Thyroid gland (tissue), 4 donors: ENCODE measurements at regions of chr11 and their contacts with region 1.

Region 1: DNA sequence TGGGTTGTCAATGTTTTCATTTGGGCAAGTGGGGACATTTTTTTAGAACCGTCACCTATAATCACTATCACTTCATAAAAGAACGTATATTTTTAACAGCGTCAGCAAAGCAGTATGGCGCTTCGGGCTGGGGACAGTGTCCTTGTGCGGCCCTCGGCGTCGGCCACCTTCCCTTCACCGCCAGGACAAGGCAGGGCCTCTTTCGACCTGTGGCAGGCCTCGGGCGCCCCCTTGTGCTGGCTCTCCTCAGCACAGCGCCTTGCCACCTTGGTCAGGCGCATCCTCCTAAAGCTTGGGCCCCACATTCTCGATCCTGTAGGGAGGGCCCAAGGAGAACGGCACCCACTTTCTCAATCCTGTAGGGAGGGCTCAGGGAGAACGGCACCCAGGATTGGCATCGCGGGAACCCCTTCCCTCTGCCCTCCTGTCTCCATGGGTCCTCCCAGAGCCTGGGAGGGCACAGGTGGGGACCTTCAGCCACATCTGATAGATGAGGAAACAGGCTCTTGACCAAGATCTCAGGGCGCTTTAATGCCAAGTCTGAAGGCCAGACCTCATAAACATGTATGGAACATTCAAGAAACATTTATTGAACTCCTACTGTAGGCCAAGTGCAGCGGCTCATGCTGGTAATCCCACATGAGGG is 11.5 kb upstream of the FADD start:
- DNase-seq: peak; percentile 80 to 82
- H3K4me3 ChIP-seq: no peak overlapping the region
- H3K27ac ChIP-seq: no peak overlapping the region
- H3K4me1 ChIP-seq: no peaks in the 10 kb centered on the region
- H3K27me3 ChIP-seq: no peaks in the 10 kb centered on the region
- CTCF ChIP-seq: peak; percentile 84 to 97 (median 90)
- POLR2A ChIP-seq: no peak

Region 2: DNA sequence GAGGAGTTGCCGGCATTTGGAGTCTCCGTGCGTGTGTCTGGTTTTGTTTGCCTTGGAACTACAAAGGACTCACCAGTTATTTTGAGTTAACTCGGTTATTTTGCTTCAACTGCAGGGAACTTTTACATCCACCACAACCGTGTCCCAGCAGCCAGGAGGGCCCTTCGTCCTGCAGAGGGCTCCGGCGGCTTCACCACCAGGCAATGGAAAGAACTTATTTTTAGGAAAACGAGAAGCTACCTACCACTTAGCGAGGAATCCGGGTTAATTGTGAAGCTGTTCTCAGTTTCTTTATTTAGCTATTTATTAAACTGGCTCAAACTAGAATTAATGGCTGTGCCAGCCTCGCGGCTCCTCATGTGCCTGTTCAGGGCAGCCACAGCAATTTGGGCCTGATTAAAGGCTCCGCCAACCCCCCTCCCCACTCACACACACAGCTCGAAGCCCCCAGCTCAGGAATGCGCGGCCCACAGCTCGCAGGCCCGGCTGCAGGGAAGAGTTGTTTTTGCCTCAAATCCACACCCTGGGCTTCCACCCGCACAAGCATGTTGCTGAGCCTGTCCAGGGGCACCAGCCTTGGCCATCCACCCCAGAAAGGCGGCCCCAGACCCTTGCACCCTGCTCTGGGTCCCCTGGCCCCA is 316.5 kb before region 1 on chr11:
- intact Hi-C with region 1: no loop called
- DNase-seq: no peak
- H3K4me3 ChIP-seq: no peak overlapping the region
- H3K27ac ChIP-seq: no peak overlapping the region
- H3K4me1 ChIP-seq: no peaks in the 10 kb centered on the region
- H3K27me3 ChIP-seq: no peaks in the 10 kb centered on the region
- CTCF ChIP-seq: no peak
- POLR2A ChIP-seq: no peak

Region 3: GRCh38 chr11:69918938-69919650 is 272.5 kb before region 1 on chr11:
- intact Hi-C with region 1: loop called (anchors 2 kb)
- DNase-seq: peak; percentile 68 to 69
- H3K4me3 ChIP-seq: no peak overlapping the region
- H3K27ac ChIP-seq: peak overlapping the region in 1 of 3 donors; percentile 45
- H3K4me1 ChIP-seq: peaks cover 0 to 23% of the 10 kb centered on the region in 2 donors
- H3K27me3 ChIP-seq: no peaks in the 10 kb centered on the region
- CTCF ChIP-seq: peak; percentile 81 to 95 (median 87)
- POLR2A ChIP-seq: no peak

Region 4: GRCh38 chr11:70233034-70233995 is 41.7 kb after region 1 on chr11:
- intact Hi-C with region 1: no loop called
- DNase-seq: no peak
- H3K4me3 ChIP-seq: no peak overlapping the region
- H3K27ac ChIP-seq: no peak overlapping the region
- H3K4me1 ChIP-seq: no peaks in the 10 kb centered on the region
- H3K27me3 ChIP-seq: no peaks in the 10 kb centered on the region
- CTCF ChIP-seq: no peak
- POLR2A ChIP-seq: no peak

Region 5: DNA sequence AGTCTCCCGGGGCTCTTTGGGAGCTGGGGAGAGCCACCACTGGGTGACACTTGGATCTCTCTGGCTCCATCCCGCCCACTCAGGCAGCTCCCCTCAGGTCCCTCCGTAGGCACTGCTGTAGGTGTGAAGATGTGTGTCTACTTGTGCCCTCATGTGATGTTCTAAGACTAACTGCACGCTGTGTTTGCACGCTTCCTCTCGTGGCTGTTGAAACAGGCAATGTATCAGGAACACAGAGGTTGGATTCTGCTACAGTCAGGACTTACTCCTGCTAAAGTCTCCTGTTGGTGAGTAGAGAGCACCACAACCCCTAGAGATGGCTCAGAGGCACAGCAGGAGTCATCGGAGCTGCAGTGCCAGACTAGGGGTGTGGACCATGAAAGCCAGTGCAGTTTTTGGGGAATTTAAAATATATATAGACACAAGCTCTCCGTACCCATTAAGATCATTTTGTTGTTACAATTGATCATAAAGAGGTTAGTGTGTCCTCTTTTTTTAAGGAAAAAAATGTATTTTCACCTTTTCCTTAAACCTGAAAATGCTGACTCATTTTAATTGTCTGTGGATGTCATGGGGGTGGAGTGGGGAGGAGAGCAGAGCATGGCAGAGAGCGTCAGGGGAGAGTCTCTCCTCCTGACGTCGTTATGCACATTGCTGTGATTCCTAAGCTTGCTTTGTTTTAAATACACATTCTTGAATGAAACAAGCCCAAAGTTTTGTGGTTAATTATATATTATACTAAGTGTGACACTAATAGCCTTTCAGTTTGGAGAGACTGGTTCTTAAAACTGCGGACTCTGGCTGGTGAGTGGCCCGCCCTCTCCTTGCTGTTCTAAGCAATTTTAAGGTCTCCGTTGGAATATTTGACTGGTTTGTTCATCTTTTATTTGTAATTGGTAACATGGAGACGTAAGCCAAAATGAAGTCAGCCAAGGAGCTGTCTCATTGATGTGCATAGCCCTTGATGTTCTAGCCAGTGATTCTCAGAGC is 190.5 kb after region 1 on chr11:
- intact Hi-C with region 1: no loop called
- DNase-seq: no peak
- H3K4me3 ChIP-seq: no peak overlapping the region
- H3K27ac ChIP-seq: peak overlapping the region; percentile 52 to 74 (median 62)
- H3K4me1 ChIP-seq: peaks cover 0 to 10% of the 10 kb centered on the region in 2 donors
- H3K27me3 ChIP-seq: no peaks in the 10 kb centered on the region
- CTCF ChIP-seq: no peak
- POLR2A ChIP-seq: no peak

Region 6: GRCh38 chr11:71080239-71081097 is 888.9 kb after region 1 on chr11:
- intact Hi-C with region 1: no loop called
- DNase-seq: peak; percentile 86 to 92
- H3K4me3 ChIP-seq: no peak overlapping the region
- H3K27ac ChIP-seq: no peak overlapping the region
- H3K4me1 ChIP-seq: no peaks in the 10 kb centered on the region
- H3K27me3 ChIP-seq: no peaks in the 10 kb centered on the region
- CTCF ChIP-seq: peak in 5 of 6 experiments; percentile 18 to 96 (median 80)
- POLR2A ChIP-seq: no peak